ENCODE measurements at regions of chr15 and their contacts with region 1.

Region 1: GRCh38 chr15:44584162-44584749 is 47.3 kb downstream of the EIF3J start:
- DNase-seq: no peak
- H3K4me3 ChIP-seq: no peak overlapping the region
- CTCF ChIP-seq: peak; percentile 50

Region 2: DNA sequence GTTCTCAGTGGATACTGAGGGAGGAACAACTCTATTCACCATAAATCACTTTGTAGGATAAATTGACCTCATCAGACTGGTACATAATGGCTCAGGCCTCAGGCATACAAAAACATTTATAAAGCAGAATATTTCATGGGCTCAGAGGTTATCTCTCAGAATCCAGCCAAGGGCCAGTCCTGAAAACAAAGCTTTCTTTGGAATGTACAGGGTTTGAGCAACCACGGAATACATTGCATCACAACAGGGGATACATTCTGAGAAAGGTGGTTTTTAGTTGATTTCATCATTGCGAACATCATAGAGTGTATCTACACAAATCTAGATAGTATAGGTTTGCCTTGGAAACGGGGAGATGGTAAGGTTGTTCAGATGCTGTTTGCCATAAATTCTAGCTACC is 190.2 kb before region 1 on chr15:
- CTCF ChIA-PET with region 1: no interaction called
- POLR2A ChIA-PET with region 1: no interaction called
- DNase-seq: no peak
- H3K4me3 ChIP-seq: no peak overlapping the region
- CTCF ChIP-seq: no peak

Region 3: GRCh38 chr15:44545913-44546802 is 38.1 kb before region 1 on chr15:
- CTCF ChIA-PET with region 1: interaction called, 14 read pairs
- POLR2A ChIA-PET with region 1: no interaction called
- DNase-seq: no peak
- H3K4me3 ChIP-seq: no peak overlapping the region
- CTCF ChIP-seq: no peak

Region 4: GRCh38 chr15:44570361-44570760 is 13.9 kb before region 1 on chr15:
- CTCF ChIA-PET with region 1: interaction called, 71 read pairs
- POLR2A ChIA-PET with region 1: no interaction called
- DNase-seq: no peak
- H3K4me3 ChIP-seq: no peak overlapping the region
- CTCF ChIP-seq: no peak

Region 5: DNA sequence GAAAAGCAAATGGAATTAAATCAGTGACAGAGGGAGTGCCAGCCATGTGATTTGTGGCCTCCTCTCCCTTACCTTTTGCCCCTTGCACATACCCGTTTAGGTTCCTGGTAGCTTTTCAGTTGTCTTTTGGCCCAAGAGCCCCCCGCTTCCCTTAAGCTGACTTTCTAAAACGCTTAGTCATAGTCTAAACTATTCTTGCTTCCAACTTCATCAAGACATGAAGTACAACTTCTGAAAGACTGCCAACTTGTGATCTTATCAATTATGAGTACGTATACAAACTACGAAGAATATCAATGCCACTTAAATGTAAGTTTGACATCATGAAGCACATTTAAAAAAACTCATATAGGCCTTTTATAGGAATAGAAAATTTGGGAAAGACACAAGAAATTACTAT is 14.6 kb after region 1 on chr15:
- CTCF ChIA-PET with region 1: interaction called, 34 read pairs
- POLR2A ChIA-PET with region 1: no interaction called
- DNase-seq: peak; percentile 46
- H3K4me3 ChIP-seq: no peak overlapping the region
- CTCF ChIP-seq: no peak

Region 6: DNA sequence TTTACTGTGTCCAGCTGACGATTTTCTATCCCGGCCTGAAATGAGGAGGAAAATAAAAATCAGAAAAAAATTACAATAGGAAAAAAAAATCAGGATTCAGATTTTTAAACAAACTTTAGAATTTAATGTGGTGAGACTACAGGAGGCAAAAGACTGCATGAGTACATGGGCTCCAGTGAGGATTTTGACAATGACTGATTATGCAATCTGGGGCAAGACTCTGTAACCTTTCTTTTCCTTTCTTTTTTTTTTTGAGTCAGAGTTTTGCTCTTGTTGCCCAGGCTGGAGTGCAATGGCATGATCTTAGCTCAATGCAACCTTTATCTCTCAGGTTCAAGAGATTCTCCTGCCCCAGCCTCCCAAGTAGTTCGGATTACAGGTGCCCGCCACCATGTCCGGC is 49.3 kb after region 1 on chr15:
- CTCF ChIA-PET with region 1: interaction called, 16 read pairs
- POLR2A ChIA-PET with region 1: no interaction called
- DNase-seq: no peak
- H3K4me3 ChIP-seq: no peak overlapping the region
- CTCF ChIP-seq: no peak

Measured in AG04449 (cell line).